Vagina (tissue), 2 donors: ENCODE measurements at regions of chr17 and their contacts with region 1.

Region 1: DNA sequence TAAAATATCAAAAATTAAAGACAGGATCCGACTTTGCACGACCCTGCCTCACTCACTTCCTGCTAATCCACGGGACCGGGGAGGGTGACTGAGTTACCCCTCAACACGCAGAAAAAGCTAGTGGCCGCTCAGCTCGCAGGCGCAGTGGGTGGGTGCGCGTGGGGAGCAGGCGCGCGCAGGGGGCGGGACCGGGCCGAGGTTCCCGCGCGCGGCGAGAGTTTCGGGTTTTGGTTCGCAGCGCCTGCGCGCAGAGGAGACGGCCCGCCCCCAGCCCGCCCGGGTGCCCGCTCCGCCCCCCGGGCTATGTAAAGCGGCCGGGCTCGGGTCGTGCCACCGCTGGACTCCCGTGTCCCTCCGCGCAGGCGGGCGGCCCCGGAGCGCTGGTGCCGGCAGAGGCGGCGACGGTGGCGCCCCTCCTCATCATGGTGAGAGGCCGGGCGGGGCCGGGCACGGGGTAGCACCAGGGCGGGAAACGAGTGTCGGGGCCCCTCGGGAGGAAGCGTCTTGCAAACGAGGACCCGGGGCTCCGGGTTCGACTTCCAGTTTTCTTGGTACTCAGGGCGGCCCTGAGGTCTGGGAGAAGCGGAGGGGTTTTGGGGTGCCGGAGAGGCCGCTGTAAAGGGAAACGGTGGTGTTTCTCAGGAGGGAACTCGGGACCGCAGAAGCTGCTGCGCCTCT is at the start of gene CNP:
- DNase-seq: no peak
- H3K4me3 ChIP-seq: peak within 1 kb of the TSS; percentile 75 to 87
- H3K27ac ChIP-seq: peak within 1 kb of the TSS; percentile 92
- H3K4me1 ChIP-seq: peaks cover 58% of the 10 kb centered on the region
- H3K27me3 ChIP-seq: no peaks in the 10 kb centered on the region
- CTCF ChIP-seq: no peak
- POLR2A ChIP-seq: peak in 1 of 2 donors; percentile 61
- total RNA-seq, gene CNP: 54.0 TPM

Region 2: DNA sequence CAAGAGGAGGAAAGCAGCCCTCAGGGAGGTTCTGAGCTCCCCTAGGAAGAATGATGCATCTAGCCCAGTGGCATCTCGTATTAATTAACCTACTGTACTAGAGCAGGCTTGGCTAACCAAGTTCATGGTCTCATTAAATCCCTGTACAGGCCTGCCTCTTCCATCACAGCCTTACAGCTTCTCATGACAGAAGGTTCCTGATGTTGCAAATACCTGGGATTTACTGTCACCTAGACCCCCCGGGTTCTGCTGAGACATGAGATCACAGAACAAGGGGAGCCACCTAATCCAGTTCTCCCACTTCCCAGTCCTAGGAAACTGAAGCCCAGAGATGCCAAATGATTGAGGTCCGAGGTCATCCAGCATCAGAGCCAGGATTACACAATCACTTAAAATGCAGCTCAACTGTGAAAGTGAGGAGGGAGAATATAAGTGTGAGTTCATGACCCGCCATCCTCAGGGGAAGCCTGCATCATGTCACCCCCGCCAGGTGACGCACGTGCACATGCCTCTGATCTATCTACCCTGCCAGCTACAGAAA is 71.7 kb before region 1 on chr17:
- intact Hi-C with region 1: no loop called
- DNase-seq: no peak
- H3K4me3 ChIP-seq: no peak overlapping the region
- H3K27ac ChIP-seq: peak overlapping the region; percentile 85
- H3K4me1 ChIP-seq: peaks cover 18% of the 10 kb centered on the region
- H3K27me3 ChIP-seq: no peaks in the 10 kb centered on the region
- CTCF ChIP-seq: no peak
- POLR2A ChIP-seq: no peak

Region 3: GRCh38 chr17:41918314-41919164 is 48.1 kb before region 1 on chr17 and contains the start of gene ACLY:
- intact Hi-C with region 1: no loop called
- DNase-seq: peak in 1 of 2 donors; percentile 97
- H3K4me3 ChIP-seq: peak within 1 kb of the TSS; percentile 77 to 85
- H3K27ac ChIP-seq: peak within 1 kb of the TSS; percentile 89
- H3K4me1 ChIP-seq: peaks cover 36% of the 10 kb centered on the region
- H3K27me3 ChIP-seq: no peaks in the 10 kb centered on the region
- CTCF ChIP-seq: no peak
- POLR2A ChIP-seq: peak in 1 of 2 donors; percentile 85
- total RNA-seq, gene ACLY: 74.9 TPM

Region 4: GRCh38 chr17:42019509-42020404 is 53.2 kb after region 1 on chr17 and contains the start of gene NKIRAS2:
- intact Hi-C with region 1: loop called (anchors 5 kb)
- DNase-seq: peak in 1 of 2 donors; percentile 91
- H3K4me3 ChIP-seq: peak within 1 kb of the TSS; percentile 74 to 89
- H3K27ac ChIP-seq: peak within 1 kb of the TSS; percentile 91
- H3K4me1 ChIP-seq: peaks cover 43% of the 10 kb centered on the region
- H3K27me3 ChIP-seq: no peaks in the 10 kb centered on the region
- CTCF ChIP-seq: peak; percentile 79 to 95 (median 83)
- POLR2A ChIP-seq: peak in 1 of 2 donors; percentile 30
- total RNA-seq, gene NKIRAS2: 28.7 TPM